ENCODE measurements at regions of chr22 and their contacts with region 1.

Region 1: DNA sequence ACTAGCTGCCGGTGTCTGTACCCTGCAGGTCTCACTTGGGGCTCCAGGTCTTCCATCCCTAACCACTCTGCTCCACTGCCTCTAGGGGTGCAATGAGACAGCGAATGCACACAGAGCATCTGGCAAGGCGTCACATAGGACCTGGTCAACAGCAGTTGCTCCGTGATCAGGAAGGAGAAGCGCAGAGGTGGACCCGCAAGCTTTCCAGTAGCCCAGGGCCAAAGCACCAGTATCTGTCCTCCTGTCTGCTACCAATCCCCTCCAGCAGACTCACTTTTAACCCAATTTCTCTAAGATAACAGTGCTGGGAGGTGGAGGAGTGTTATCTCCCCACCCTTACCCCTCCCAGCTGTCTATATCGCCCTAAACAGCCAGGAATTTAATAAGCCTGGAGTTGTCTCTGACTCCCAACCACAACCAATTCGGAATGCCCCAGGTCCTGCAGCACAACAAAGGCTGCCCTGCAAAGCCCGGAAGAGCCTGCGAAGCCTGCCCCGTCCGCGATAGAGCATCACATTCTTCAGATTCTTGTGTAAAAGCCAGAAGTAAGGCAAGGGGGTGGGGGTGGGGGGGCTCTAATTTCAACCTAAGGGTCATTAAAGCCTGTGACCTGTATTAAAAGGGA is 19.3 kb downstream of the MYH9 start:
- DNase-seq: peak; percentile 69 to 82
- H3K4me3 ChIP-seq: no peak overlapping the region
- H3K4me3 Mint-ChIP-seq: peak overlapping the region; percentile 60
- H3K27ac Mint-ChIP-seq: peak overlapping the region; percentile 79
- H3K4me1 ChIP-seq: peaks cover 94% of the 10 kb centered on the region
- H3K4me1 Mint-ChIP-seq: peaks cover 64% of the 10 kb centered on the region
- H3K27me3 ChIP-seq: no peaks in the 10 kb centered on the region
- H3K27me3 Mint-ChIP-seq: no peaks in the 10 kb centered on the region
- CTCF ChIP-seq: peak in 1 of 2 experiments; percentile 14

Region 2: GRCh38 chr22:36077271-36077670 is 291.2 kb before region 1 on chr22:
- CTCF ChIA-PET with region 1: no interaction called
- POLR2A ChIA-PET with region 1: no interaction called
- intact Hi-C with region 1: no loop called
- DNase-seq: no peak
- H3K4me3 ChIP-seq: no peak overlapping the region
- H3K4me3 Mint-ChIP-seq: no peak overlapping the region
- H3K27ac Mint-ChIP-seq: no peak overlapping the region
- H3K4me1 ChIP-seq: no peaks in the 10 kb centered on the region
- H3K4me1 Mint-ChIP-seq: no peaks in the 10 kb centered on the region
- H3K27me3 ChIP-seq: no peaks in the 10 kb centered on the region
- H3K27me3 Mint-ChIP-seq: no peaks in the 10 kb centered on the region
- CTCF ChIP-seq: no peak

Region 3: GRCh38 chr22:36409911-36410756 is 41.7 kb after region 1 on chr22:
- CTCF ChIA-PET with region 1: no interaction called
- POLR2A ChIA-PET with region 1: interaction called, 3 read pairs
- intact Hi-C with region 1: loop called (anchors 2 kb)
- DNase-seq: peak; percentile 98 to 99
- H3K4me3 ChIP-seq: peak overlapping the region; percentile 45
- H3K4me3 Mint-ChIP-seq: peak overlapping the region; percentile 69
- H3K27ac Mint-ChIP-seq: peak overlapping the region; percentile 90
- H3K4me1 ChIP-seq: peaks cover 21% of the 10 kb centered on the region
- H3K4me1 Mint-ChIP-seq: peaks cover 13% of the 10 kb centered on the region
- H3K27me3 ChIP-seq: no peaks in the 10 kb centered on the region
- H3K27me3 Mint-ChIP-seq: no peaks in the 10 kb centered on the region
- CTCF ChIP-seq: peak; percentile 10 to 11

Region 4: DNA sequence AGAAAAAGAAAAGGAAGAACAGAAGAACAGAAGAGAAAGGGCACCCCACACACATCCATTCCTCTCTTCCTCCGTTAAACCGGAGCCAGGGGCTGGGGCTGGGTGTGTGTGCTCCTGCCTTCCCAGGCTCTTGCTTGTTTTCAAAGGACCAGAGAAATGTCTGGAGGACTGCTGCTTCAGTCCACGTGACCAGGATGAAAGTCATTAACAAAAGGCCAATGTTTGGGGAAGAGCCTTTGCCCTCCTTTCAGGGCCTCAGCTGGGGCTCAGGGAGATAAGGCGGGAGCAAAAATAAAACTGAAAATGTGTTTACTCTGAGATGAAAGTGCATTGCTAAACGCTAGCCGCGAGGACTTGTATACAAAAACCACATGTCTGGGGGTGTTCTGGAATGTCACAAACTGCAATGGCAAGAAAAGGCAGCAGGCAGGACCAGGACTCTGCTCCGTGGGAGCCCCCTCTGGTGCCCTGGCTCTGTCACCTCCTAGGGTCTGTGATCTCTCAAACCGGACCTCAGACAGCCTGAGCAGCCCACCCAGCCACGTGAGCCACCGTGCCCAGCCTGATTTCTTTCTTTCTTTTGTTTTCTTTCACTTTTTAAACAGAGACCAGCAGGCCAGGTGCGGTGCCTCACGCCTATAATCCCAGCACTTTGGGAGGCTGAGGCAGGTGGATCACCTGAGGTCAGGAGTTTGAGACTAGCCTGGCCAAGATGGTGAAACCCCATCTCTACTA is 50.9 kb after region 1 on chr22:
- CTCF ChIA-PET with region 1: interaction called, 4 read pairs
- POLR2A ChIA-PET with region 1: interaction called, 6 read pairs
- intact Hi-C with region 1: loop called (anchors 2 kb)
- DNase-seq: peak; percentile 91 to 92
- H3K4me3 ChIP-seq: peak overlapping the region; percentile 25
- H3K4me3 Mint-ChIP-seq: peak overlapping the region; percentile 70
- H3K27ac Mint-ChIP-seq: peak overlapping the region; percentile 91
- H3K4me1 ChIP-seq: peaks cover 41% of the 10 kb centered on the region
- H3K4me1 Mint-ChIP-seq: peaks cover under 1% of the 10 kb centered on the region
- H3K27me3 ChIP-seq: no peaks in the 10 kb centered on the region
- H3K27me3 Mint-ChIP-seq: no peaks in the 10 kb centered on the region
- CTCF ChIP-seq: no peak

Measured in Caco-2 (cell line).